IMR-90 (cell line): ENCODE measurements at regions of chr10 and their contacts with region 1.

Region 1: DNA sequence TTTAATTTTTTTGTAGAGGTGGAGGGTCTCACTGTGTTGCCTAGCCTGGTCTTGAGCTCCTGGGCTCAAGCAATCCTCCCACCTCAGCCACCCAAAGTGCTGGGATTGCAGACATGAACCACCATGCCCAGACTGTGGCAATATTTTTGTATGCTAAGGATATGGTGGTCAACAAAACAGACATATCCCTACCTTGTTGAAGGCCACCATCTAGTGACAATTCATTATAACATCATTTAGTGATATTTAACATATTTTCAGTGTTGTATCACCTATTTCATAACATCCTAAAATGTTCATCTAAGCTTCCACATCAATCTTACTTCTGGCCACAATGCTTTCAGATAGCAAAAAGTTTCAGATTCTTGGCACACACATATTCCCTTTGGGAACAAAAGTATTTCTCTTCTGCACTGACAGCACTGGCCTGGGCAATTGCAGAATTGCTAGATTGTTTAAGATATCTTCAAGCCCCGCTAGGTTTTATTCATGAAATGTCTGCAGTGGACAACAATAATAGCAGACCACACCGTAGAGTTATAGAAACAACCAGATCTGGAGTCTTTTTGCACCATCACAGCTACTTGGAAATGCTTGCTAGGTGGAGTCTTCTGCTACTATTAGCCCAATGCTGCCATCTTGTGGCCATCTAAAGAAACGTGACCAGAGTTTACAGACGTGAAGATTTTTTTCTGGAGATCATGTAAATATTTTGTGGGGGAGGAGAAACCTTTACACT is 58.4 kb downstream of the DNAJC12 start:
- DNase-seq: peak; percentile 84
- ATAC-seq: peak; percentile 88
- H3K4me3 ChIP-seq: no peak overlapping the region
- H3K27ac ChIP-seq: no peak overlapping the region
- H3K4me1 ChIP-seq: no peaks in the 10 kb centered on the region
- H3K27me3 ChIP-seq: peaks cover 3% of the 10 kb centered on the region
- CTCF ChIP-seq: peak; percentile 90
- POLR2A ChIP-seq: no peak
- RAD21 ChIP-seq: peak; percentile 90

Region 2: DNA sequence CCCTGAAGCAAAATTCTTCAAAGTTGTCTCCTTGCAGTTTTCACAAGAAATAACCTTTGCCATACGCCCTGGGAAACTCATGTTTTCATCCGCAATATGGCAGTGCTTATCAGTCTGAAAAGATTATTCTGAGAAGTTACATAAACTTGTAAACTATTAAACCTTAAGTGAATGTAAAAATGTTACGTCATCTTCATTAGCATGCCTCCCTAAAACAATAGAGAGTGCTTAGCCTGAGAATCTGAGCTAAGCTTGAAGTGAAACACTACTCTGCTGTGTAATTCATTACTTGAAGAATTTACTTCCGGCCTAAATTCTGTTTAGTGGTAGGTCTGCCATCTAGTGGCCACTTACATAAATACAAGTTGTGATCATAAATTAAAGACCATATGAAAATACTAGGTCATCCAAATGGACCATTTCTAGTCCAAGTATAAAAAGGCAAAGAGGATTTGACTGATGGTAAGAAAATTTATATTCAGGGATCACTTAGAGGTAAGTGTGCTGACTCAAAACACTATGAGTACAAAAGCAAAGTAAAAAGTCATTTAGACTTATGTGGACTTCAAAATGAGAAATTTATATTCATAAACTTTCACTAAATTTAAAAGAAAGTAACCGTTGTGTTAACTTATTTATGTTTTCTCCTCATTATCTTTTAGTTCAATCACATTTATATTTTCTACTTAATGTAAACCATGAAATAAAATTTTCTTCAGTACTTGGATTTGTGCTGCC is 1598.9 kb before region 1 on chr10:
- CTCF ChIA-PET with region 1: no interaction called
- POLR2A ChIA-PET with region 1: no interaction called
- dilution Hi-C with region 1: no loop called
- in situ Hi-C with region 1: no loop called
- intact Hi-C with region 1: loop called (anchors 10 kb)
- DNase-seq: peak; percentile 52
- ATAC-seq: peak; percentile 77
- H3K4me3 ChIP-seq: no peak overlapping the region
- H3K27ac ChIP-seq: no peak overlapping the region
- H3K4me1 ChIP-seq: no peaks in the 10 kb centered on the region
- H3K27me3 ChIP-seq: no peaks in the 10 kb centered on the region
- CTCF ChIP-seq: peak; percentile 64
- POLR2A ChIP-seq: no peak
- RAD21 ChIP-seq: peak; percentile 49

Region 3: DNA sequence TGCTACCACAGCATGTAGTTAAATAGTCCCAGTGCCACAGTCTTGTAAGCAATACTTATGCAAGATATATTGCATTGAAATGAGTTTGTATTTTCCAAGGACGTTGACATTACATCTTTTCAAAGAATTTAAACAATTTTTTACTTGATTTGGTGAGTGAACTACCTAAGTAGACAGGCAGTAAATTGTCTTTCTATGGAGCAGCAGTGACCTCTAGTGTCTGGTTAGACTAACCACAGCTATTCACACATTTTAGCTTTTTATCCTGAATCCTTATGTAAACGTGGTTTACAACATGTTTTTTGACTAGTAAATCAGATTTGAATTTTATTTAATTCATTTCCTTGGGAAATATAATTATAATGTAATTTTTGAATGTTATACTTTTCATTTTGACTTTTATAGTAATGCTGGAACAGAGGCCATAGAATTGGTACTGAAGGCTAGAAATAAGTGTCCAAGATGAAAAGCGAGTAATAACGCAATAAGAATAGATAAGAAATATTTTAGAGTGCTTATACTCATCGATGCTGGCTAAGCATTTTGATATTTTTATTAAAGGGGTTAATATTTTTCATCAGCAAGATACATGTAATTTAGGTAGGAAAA is 848.2 kb before region 1 on chr10:
- CTCF ChIA-PET with region 1: interaction called, 9 read pairs
- POLR2A ChIA-PET with region 1: no interaction called
- dilution Hi-C with region 1: no loop called
- in situ Hi-C with region 1: no loop called
- intact Hi-C with region 1: loop called (anchors 2 kb)
- DNase-seq: peak; percentile 77
- ATAC-seq: peak; percentile 92
- H3K4me3 ChIP-seq: no peak overlapping the region
- H3K27ac ChIP-seq: no peak overlapping the region
- H3K4me1 ChIP-seq: no peaks in the 10 kb centered on the region
- H3K27me3 ChIP-seq: peaks cover 13% of the 10 kb centered on the region
- CTCF ChIP-seq: peak; percentile 86
- POLR2A ChIP-seq: no peak
- RAD21 ChIP-seq: peak; percentile 91

Region 4: GRCh38 chr10:67306588-67307205 is 472.9 kb before region 1 on chr10:
- CTCF ChIA-PET with region 1: no interaction called
- POLR2A ChIA-PET with region 1: no interaction called
- dilution Hi-C with region 1: no loop called
- in situ Hi-C with region 1: no loop called
- intact Hi-C with region 1: loop called (anchors 1 kb)
- DNase-seq: peak; percentile 4
- ATAC-seq: no peak
- H3K4me3 ChIP-seq: no peak overlapping the region
- H3K27ac ChIP-seq: no peak overlapping the region
- H3K4me1 ChIP-seq: no peaks in the 10 kb centered on the region
- H3K27me3 ChIP-seq: no peaks in the 10 kb centered on the region
- CTCF ChIP-seq: peak; percentile 49
- POLR2A ChIP-seq: no peak
- RAD21 ChIP-seq: peak; percentile 19; the same call in 1 of the 2 replicates

Region 5: DNA sequence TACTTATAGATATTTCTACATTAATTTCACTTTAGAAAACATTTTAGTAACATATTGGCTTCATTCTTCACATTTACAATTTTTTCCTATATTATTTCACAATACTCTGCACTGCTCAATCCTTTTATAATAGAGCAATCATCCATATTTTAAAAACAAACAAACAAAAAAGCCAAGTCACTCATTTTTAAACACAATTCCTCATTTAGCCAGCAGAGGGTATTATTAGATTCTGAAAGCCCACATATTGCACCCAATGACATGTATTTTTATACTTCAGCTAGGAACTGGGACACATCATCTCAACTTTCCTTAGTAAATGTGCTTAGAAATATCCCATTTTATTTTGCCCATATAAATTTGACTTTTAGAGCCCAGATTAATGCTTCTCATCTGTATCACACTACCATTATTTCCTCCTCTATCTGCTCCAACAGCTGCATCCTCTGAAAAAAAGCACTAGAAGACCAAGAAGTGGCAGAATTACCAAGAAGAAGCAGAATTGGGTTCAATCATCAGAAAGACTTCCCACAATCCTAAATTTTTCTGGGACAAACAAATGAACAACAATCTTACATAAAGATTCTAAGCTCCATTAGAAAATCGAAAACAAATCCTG is 113.1 kb before region 1 on chr10:
- CTCF ChIA-PET with region 1: interaction called, 3 read pairs
- POLR2A ChIA-PET with region 1: no interaction called
- dilution Hi-C with region 1: no loop called
- in situ Hi-C with region 1: no loop called
- intact Hi-C with region 1: loop called (anchors 1 kb)
- DNase-seq: peak; percentile 30
- ATAC-seq: no peak
- H3K4me3 ChIP-seq: no peak overlapping the region
- H3K27ac ChIP-seq: no peak overlapping the region
- H3K4me1 ChIP-seq: no peaks in the 10 kb centered on the region
- H3K27me3 ChIP-seq: no peaks in the 10 kb centered on the region
- CTCF ChIP-seq: peak; percentile 44
- POLR2A ChIP-seq: no peak
- RAD21 ChIP-seq: peak; percentile 39

Region 6: GRCh38 chr10:67697724-67698131 is 81.9 kb before region 1 on chr10:
- CTCF ChIA-PET with region 1: interaction called, 34 read pairs
- POLR2A ChIA-PET with region 1: interaction called, 3 read pairs
- dilution Hi-C with region 1: no loop called
- in situ Hi-C with region 1: no loop called
- intact Hi-C with region 1: loop called (anchors 1 kb)
- DNase-seq: peak; percentile 56
- ATAC-seq: peak; percentile 92
- H3K4me3 ChIP-seq: no peak overlapping the region
- H3K27ac ChIP-seq: no peak overlapping the region
- H3K4me1 ChIP-seq: no peaks in the 10 kb centered on the region
- H3K27me3 ChIP-seq: peaks cover 8% of the 10 kb centered on the region
- CTCF ChIP-seq: peak; percentile 58
- POLR2A ChIP-seq: no peak
- RAD21 ChIP-seq: peak; percentile 41